ENCODE measurements at regions of chr1 and their contacts with region 1.

Region 1: DNA sequence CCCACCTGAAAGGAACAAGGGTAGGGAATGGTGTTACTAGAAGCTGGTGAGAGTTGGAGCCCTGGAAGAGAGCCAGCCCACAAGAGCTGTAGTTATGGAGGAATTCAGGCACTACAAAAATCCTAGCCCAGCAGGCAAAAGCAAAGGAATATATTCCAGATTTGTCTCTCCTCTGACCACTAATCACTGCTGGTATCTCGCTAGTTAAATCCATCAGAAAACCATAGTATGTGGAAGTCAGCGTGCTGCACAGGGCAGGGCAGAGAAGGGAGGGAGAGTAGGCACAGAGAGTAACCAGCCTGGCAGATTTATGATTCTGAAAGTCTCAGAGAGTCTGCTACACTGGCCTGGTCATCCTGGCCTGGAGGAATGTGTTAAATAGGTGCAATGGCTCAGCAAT is 88.6 kb downstream of the SELENOF start:
- DNase-seq: peak in 1 of 3 donors; percentile 31
- ATAC-seq: no peak
- H3K4me3 ChIP-seq: no peak overlapping the region
- H3K27ac ChIP-seq: no peak overlapping the region
- H3K4me1 ChIP-seq: peaks cover 0 to 17% (median 0%) of the 10 kb centered on the region in 4 donors
- H3K27me3 ChIP-seq: no peaks in the 10 kb centered on the region
- CTCF ChIP-seq: no peak
- POLR2A ChIP-seq: no peak

Region 2: GRCh38 chr1:86875722-86876121 is 50.4 kb after region 1 on chr1:
- intact Hi-C with region 1: no loop called
- DNase-seq: no peak
- ATAC-seq: no peak
- H3K4me3 ChIP-seq: no peak overlapping the region
- H3K27ac ChIP-seq: no peak overlapping the region
- H3K4me1 ChIP-seq: no peaks in the 10 kb centered on the region
- H3K27me3 ChIP-seq: no peaks in the 10 kb centered on the region
- CTCF ChIP-seq: no peak
- POLR2A ChIP-seq: no peak

Region 3: DNA sequence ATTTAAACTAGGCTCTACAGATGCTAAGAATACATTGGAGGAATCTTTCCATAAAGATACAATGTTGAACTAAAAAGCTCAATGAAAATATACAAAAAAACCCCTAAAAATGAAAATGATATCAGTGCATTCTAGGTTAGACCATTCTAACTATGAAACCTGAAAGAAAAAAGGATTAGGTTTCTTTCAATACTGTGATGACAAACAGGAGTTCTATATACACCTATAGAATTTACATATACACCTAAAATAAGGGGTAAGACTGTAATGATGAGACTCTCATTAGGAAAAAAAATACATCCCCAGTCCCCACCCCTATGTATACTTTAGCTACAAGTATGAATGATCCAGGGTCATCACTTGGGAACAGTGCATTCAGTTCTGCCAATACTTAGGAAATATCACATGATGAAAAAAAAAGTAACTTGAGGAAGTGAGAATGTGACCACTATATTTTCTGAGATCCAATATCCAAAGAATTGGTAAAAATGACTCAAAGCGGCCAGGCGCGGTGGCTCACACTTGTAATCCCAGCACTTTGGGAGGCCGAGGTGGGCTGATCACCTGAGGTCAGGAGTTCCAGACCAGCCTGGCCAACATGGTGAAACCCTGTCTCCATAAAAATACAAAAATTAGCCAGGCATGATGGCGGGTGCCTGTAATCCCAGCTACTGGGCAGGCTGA is 62.3 kb after region 1 on chr1:
- intact Hi-C with region 1: no loop called
- DNase-seq: no peak
- ATAC-seq: no peak
- H3K4me3 ChIP-seq: no peak overlapping the region
- H3K27ac ChIP-seq: no peak overlapping the region
- H3K4me1 ChIP-seq: no peaks in the 10 kb centered on the region
- H3K27me3 ChIP-seq: no peaks in the 10 kb centered on the region
- CTCF ChIP-seq: no peak
- POLR2A ChIP-seq: no peak

Region 4: DNA sequence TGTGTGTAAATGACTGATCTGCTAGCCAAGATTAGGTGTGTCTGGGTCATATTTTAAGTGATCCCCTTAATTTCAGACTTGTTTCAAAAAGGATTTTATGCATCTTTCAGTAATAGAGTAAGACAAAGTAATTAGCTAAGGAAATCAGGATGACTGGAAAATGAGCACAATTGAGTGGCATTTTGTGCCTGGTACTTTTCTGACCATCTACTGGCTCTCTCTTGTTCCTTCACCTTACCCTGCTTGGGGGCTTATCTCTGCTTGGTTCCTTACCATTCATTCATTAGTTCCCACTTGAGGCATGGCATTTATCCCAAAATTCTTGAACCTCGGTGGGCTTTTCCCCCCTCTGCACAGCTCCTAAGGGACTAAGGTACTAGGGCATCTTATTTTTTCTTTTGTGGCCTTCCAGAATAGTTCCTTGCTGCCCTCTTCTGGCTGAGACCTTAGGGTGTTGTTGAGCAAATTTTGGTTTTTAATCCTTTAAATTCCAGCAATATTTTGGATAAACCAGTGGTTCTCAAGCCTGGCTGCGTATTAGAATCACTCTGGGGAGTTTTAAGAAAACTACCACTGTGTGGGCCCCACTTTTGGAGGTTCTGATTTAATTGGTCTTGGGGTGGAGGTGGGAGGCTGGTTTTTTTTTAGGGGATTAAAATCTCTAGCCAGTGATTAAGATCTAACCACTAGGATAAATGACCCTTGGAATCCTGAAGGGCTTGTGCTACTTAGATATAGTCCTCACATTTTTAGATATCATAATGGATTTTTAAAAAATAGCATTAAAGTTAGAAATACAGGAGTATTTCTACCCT is 139.9 kb after region 1 on chr1:
- intact Hi-C with region 1: loop called in 1 of 2 experiments (anchors 10 kb)
- DNase-seq: no peak
- ATAC-seq: peak; percentile 63 to 79 (median 71)
- H3K4me3 ChIP-seq: no peak overlapping the region
- H3K27ac ChIP-seq: no peak overlapping the region
- H3K4me1 ChIP-seq: no peaks in the 10 kb centered on the region
- H3K27me3 ChIP-seq: no peaks in the 10 kb centered on the region
- CTCF ChIP-seq: peak; percentile 60 to 71 (median 62)
- POLR2A ChIP-seq: no peak

Measured in right lobe of liver (tissue), 6 donors.